Activated T-helper 1 cell treated with anti-CD3 and anti-CD28 coated beads, Interleukin-12 subunit alpha, Interleukin-12 subunit beta, Interleukin-2, Interleukin-4 antibody, amounts not matched to agents 30 ng/mL and 10 ng/mL and 1 ng/mL, durations not matched to agents 14 hours and 24 hours and 36 hours (primary cell): ENCODE measurements at regions of chr18 and their contacts with region 1.

Region 1: DNA sequence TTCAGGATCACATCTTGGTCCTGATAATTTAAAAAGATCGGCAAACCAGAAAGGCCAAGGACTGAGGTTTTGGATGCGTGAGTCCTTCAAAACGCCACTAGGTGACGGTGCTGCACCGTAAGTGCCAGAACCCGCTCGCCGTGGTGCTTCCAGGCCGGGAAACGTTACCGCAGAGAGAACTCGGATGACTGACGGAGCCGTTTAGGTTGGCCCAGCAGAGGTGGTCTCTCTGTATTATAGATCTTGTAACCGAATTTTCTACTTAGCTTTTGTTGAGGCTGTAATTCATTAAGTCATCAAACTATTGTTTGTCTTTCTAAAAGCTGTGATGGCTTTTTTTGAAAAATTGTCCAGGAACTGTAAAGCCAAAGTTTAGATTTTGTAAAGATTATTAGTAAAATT is 39.8 kb upstream of the ADCYAP1 start:
- DNase-seq: peak; percentile 30
- H3K4me3 Mint-ChIP-seq: no peak overlapping the region
- H3K27ac Mint-ChIP-seq: no peak overlapping the region
- H3K4me1 Mint-ChIP-seq: peaks cover 5% of the 10 kb centered on the region
- H3K27me3 Mint-ChIP-seq: peaks cover 42% of the 10 kb centered on the region

Region 2: GRCh38 chr18:463827-464541 is 400.9 kb before region 1 on chr18:
- intact Hi-C with region 1: no loop called
- DNase-seq: no peak
- H3K4me3 Mint-ChIP-seq: no peak overlapping the region
- H3K27ac Mint-ChIP-seq: no peak overlapping the region
- H3K4me1 Mint-ChIP-seq: no peaks in the 10 kb centered on the region
- H3K27me3 Mint-ChIP-seq: peaks cover 14% of the 10 kb centered on the region

Region 3: DNA sequence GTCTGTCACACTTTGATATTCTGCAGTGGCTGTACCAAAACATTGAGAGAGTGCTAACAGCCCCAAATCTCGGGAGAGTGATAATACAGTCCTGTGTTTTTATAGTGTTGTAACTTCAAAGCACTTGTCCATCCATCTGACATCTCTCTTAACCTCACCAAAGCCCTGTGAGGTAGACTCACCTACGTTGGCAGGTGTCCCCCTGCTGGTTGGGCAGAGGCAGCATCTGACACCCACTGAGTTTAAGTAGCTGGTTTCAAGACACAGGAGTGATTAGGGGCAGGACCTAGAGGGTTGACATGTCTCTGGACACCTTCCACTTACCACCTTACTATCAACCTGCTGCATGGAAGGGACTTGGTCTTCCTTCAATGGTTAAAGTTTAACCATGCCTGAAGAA is 387.3 kb before region 1 on chr18:
- intact Hi-C with region 1: no loop called
- DNase-seq: no peak
- H3K4me3 Mint-ChIP-seq: no peak overlapping the region
- H3K27ac Mint-ChIP-seq: no peak overlapping the region
- H3K4me1 Mint-ChIP-seq: no peaks in the 10 kb centered on the region
- H3K27me3 Mint-ChIP-seq: peaks cover 5% of the 10 kb centered on the region

Region 4: GRCh38 chr18:644395-645004 is 220.4 kb before region 1 on chr18:
- intact Hi-C with region 1: no loop called
- DNase-seq: no peak
- H3K4me3 Mint-ChIP-seq: no peak overlapping the region
- H3K27ac Mint-ChIP-seq: no peak overlapping the region
- H3K4me1 Mint-ChIP-seq: peaks cover 10% of the 10 kb centered on the region
- H3K27me3 Mint-ChIP-seq: peaks cover 10% of the 10 kb centered on the region

Region 5: DNA sequence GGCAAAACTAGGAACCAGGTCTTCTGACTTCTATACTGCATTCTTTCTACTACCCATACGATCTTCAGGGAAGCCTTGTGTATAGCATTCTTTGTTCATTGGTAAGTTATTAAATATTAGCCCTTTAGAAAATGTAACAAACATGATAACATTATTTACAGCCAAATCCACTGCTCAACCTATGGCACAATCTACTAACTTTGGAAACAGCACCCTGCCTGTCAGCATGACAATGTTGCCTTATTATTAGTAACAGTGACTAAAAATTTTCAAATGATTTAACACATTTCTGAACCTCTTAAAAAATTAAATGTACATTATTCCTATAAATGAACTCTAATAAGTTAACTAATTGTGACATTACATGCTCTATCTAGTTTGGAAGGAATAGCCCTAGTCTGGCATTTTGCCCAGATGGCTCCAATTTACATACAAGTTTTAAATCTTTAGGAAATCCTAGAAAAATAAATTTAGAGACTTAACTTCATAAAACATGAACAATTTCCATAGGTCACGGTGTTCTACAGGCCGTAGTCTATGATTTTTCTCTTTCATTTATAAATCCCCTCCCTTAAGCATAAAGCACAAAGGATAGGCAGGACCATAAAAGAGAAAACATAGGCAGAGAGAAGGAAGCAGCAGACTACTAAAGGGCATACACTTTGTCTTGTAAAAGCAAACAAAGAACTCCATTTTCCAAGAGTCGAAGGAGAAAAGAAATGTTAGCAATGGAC is 86.5 kb before region 1 on chr18:
- intact Hi-C with region 1: no loop called
- DNase-seq: no peak
- H3K4me3 Mint-ChIP-seq: no peak overlapping the region
- H3K27ac Mint-ChIP-seq: no peak overlapping the region
- H3K4me1 Mint-ChIP-seq: peaks cover 19% of the 10 kb centered on the region
- H3K27me3 Mint-ChIP-seq: no peaks in the 10 kb centered on the region

Region 6: GRCh38 chr18:961644-962355 is 96.9 kb after region 1 on chr18:
- intact Hi-C with region 1: loop called (anchors 1 kb)
- DNase-seq: peak; percentile 5
- H3K4me3 Mint-ChIP-seq: no peak overlapping the region
- H3K27ac Mint-ChIP-seq: no peak overlapping the region
- H3K4me1 Mint-ChIP-seq: no peaks in the 10 kb centered on the region
- H3K27me3 Mint-ChIP-seq: peaks cover 11% of the 10 kb centered on the region

Region 7: DNA sequence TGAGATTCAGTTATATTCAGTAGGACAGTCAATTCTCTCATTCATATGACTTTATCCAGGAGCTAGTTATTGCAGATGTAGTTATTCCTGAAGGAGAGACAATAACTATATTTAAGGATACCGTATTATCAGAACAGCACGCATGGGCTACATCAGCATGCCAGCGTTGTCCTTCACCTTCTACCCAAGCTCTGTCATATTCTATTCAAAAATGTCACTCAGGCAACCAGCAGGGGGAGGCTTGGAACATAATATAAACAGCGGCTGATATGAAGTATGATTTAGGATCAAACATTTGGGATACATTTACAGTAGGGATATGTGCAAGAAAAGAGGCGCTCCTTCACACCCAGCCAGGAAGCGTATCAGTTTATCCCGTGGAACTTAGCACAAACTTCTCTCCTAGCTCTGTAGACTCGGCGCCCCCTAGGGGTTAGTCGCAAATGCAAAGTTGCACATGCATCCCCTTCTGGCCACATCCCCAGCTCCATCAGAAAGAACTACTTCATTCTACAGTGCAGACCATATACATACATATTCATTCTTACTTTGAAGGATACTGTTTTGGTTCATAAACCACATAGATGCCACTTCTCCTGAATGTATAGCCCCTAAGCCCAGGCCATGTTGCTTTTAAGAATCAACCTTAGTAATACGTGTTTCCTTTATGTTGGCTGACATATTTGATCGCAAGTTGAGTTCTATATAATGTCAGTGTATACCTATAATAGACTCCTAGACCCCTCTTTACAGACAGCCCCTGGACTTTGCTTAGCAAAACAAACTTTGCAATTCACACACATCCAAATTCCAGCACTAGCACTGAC is 799.2 kb after region 1 on chr18:
- intact Hi-C with region 1: loop called (anchors 5 kb)
- DNase-seq: no peak
- H3K4me3 Mint-ChIP-seq: no peak overlapping the region
- H3K27ac Mint-ChIP-seq: no peak overlapping the region
- H3K4me1 Mint-ChIP-seq: no peaks in the 10 kb centered on the region
- H3K27me3 Mint-ChIP-seq: no peaks in the 10 kb centered on the region

Region 8: DNA sequence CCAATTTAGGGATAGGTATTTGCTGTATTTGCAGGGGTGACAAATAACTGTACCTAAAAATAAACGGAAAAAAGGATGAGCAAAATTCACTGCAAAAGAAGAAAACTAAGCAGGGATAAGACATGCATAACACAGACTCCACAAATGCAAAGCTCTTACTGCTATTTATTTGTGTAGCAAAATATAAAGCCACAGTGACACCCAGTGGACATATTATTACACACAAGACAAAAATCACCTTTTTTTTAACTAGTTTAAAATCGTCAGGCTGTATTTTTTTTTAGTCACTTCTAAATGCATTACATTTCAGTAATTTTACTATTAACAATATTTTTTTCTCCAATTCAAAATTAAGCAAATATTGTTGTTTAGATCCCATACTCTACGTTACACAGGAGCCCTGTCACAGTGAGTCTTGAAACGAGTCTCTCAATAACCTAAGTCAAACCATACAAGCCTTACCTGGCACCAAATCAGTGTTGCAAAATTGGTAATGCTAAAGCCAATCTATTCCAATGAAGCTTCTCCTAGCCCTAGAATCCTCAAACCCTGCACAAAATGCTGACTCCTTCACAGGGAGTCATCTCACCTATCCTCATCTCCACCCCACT is 1682.7 kb after region 1 on chr18:
- intact Hi-C with region 1: loop called (anchors 2 kb)
- DNase-seq: no peak
- H3K4me3 Mint-ChIP-seq: no peak overlapping the region
- H3K27ac Mint-ChIP-seq: no peak overlapping the region
- H3K4me1 Mint-ChIP-seq: peaks cover 5% of the 10 kb centered on the region
- H3K27me3 Mint-ChIP-seq: no peaks in the 10 kb centered on the region